CD4-positive, alpha-beta memory T cell (primary cell): ENCODE measurements at regions of chr17 and their contacts with region 1.

Region 1: GRCh38 chr17:54992797-54993639 is 24.5 kb downstream of the STXBP4 start:
- DNase-seq: peak in 4 of 5 donors; percentile 49 to 59 (median 56)
- H3K4me3 ChIP-seq: no peak overlapping the region
- H3K4me3 Mint-ChIP-seq: no peak overlapping the region
- H3K27ac ChIP-seq: no peak overlapping the region
- H3K27ac Mint-ChIP-seq: no peak overlapping the region
- H3K4me1 ChIP-seq: no peaks in the 10 kb centered on the region
- H3K4me1 Mint-ChIP-seq: no peaks in the 10 kb centered on the region
- H3K27me3 ChIP-seq: no peaks in the 10 kb centered on the region
- H3K27me3 Mint-ChIP-seq: no peaks in the 10 kb centered on the region

Region 2: DNA sequence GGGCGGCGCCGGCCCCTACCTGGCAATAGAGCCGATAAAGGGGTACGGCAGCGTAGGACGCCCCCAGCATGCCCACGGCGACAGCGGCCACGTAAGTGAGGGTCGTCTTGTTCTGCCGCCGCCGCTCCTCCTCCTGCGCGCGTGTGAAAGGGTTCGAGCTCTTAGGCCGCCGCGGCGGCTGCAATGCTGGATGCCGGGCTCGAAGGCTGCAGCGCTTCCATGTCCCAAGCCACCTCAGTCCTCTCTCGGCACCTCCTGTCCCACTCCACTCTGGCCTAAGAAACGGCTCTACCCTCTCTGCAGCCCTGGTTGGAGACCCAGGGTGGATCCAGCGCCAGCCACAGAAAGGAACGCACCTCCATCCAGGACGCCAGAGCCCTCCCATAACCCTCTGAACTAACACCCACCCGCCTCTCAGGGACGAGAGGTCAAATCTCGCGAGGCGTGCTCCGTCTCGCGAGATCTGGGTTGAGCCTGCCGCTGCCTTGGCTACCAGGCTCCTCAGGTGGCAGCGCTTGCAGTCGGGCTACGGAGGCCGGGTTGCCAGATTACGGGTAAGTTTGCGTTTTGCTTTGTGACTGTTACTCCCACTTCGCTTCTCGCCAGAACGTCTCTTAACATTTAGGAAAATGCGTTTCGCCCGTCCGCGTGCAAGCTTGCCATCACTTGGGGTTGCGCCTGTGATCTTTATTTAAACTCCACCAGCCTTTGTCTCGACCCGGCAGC is 24.6 kb before region 1 on chr17 and contains the starts of genes COX11 and STXBP4:
- CTCF ChIA-PET with region 1: interaction called, 12 read pairs
- POLR2A ChIA-PET with region 1: no interaction called
- intact Hi-C with region 1: no loop called
- DNase-seq: peak; percentile 94 to 96 (median 95)
- H3K4me3 ChIP-seq: peak within 1 kb of the TSS; percentile 78 to 84
- H3K4me3 Mint-ChIP-seq: no peak within 1 kb of the TSS
- H3K27ac ChIP-seq: peak within 1 kb of the TSS; percentile 90
- H3K27ac Mint-ChIP-seq: no peak within 1 kb of the TSS
- H3K4me1 ChIP-seq: peaks cover 29% of the 10 kb centered on the region
- H3K4me1 Mint-ChIP-seq: peaks cover 8 to 23% (median 18%) of the 10 kb centered on the region in 4 donors
- H3K27me3 ChIP-seq: no peaks in the 10 kb centered on the region
- H3K27me3 Mint-ChIP-seq: no peaks in the 10 kb centered on the region
- total RNA-seq, gene COX11: 84.0 to 86.0 TPM
- total RNA-seq, gene STXBP4: 11.1 to 12.8 TPM

Region 3: GRCh38 chr17:55053855-55054254 is 60.8 kb after region 1 on chr17:
- CTCF ChIA-PET with region 1: no interaction called
- POLR2A ChIA-PET with region 1: no interaction called
- intact Hi-C with region 1: no loop called
- DNase-seq: peak in 3 of 5 donors; percentile 12 to 22 (median 18)
- H3K4me3 ChIP-seq: no peak overlapping the region
- H3K4me3 Mint-ChIP-seq: no peak overlapping the region
- H3K27ac ChIP-seq: no peak overlapping the region
- H3K27ac Mint-ChIP-seq: peak overlapping the region in 1 of 7 donors; percentile 29
- H3K4me1 ChIP-seq: no peaks in the 10 kb centered on the region
- H3K4me1 Mint-ChIP-seq: no peaks in the 10 kb centered on the region
- H3K27me3 ChIP-seq: no peaks in the 10 kb centered on the region
- H3K27me3 Mint-ChIP-seq: no peaks in the 10 kb centered on the region

Region 4: GRCh38 chr17:55295411-55296170 is 302.6 kb after region 1 on chr17:
- CTCF ChIA-PET with region 1: interaction called, 67 read pairs
- POLR2A ChIA-PET with region 1: no interaction called
- intact Hi-C with region 1: loop called (anchors 1 kb)
- DNase-seq: peak in 4 of 5 donors; percentile 58 to 64 (median 64)
- H3K4me3 ChIP-seq: no peak overlapping the region
- H3K4me3 Mint-ChIP-seq: no peak overlapping the region
- H3K27ac ChIP-seq: no peak overlapping the region
- H3K27ac Mint-ChIP-seq: peak overlapping the region in 2 of 7 donors; percentile 10 to 24
- H3K4me1 ChIP-seq: no peaks in the 10 kb centered on the region
- H3K4me1 Mint-ChIP-seq: peaks cover 0 to 5% (median under 1%) of the 10 kb centered on the region in 4 donors
- H3K27me3 ChIP-seq: no peaks in the 10 kb centered on the region
- H3K27me3 Mint-ChIP-seq: no peaks in the 10 kb centered on the region

Region 5: GRCh38 chr17:55356434-55357328 is 363.7 kb after region 1 on chr17:
- CTCF ChIA-PET with region 1: interaction called, 173 read pairs
- POLR2A ChIA-PET with region 1: interaction called, 3 read pairs
- intact Hi-C with region 1: loop called (anchors 1 kb)
- DNase-seq: peak; percentile 56 to 73 (median 61)
- H3K4me3 ChIP-seq: no peak overlapping the region
- H3K4me3 Mint-ChIP-seq: no peak overlapping the region
- H3K27ac ChIP-seq: no peak overlapping the region
- H3K27ac Mint-ChIP-seq: no peak overlapping the region
- H3K4me1 ChIP-seq: no peaks in the 10 kb centered on the region
- H3K4me1 Mint-ChIP-seq: peaks cover 0 to 4% (median 3%) of the 10 kb centered on the region in 4 donors
- H3K27me3 ChIP-seq: no peaks in the 10 kb centered on the region
- H3K27me3 Mint-ChIP-seq: peaks cover 0 to 7% of the 10 kb centered on the region in 2 donors

Region 6: GRCh38 chr17:55513885-55514591 is 521.0 kb after region 1 on chr17:
- CTCF ChIA-PET with region 1: interaction called, 7 read pairs
- POLR2A ChIA-PET with region 1: no interaction called
- intact Hi-C with region 1: loop called (anchors 1 kb)
- DNase-seq: peak; percentile 54 to 66 (median 58)
- H3K4me3 ChIP-seq: no peak overlapping the region
- H3K4me3 Mint-ChIP-seq: no peak overlapping the region
- H3K27ac ChIP-seq: no peak overlapping the region
- H3K27ac Mint-ChIP-seq: no peak overlapping the region
- H3K4me1 ChIP-seq: no peaks in the 10 kb centered on the region
- H3K4me1 Mint-ChIP-seq: peaks cover 0 to 3% (median 0%) of the 10 kb centered on the region in 4 donors
- H3K27me3 ChIP-seq: peaks cover 6% of the 10 kb centered on the region
- H3K27me3 Mint-ChIP-seq: peaks cover 2 to 4% of the 10 kb centered on the region in 2 donors